ENCODE measurements at regions of chr13 and their contacts with region 1.

Region 1: DNA sequence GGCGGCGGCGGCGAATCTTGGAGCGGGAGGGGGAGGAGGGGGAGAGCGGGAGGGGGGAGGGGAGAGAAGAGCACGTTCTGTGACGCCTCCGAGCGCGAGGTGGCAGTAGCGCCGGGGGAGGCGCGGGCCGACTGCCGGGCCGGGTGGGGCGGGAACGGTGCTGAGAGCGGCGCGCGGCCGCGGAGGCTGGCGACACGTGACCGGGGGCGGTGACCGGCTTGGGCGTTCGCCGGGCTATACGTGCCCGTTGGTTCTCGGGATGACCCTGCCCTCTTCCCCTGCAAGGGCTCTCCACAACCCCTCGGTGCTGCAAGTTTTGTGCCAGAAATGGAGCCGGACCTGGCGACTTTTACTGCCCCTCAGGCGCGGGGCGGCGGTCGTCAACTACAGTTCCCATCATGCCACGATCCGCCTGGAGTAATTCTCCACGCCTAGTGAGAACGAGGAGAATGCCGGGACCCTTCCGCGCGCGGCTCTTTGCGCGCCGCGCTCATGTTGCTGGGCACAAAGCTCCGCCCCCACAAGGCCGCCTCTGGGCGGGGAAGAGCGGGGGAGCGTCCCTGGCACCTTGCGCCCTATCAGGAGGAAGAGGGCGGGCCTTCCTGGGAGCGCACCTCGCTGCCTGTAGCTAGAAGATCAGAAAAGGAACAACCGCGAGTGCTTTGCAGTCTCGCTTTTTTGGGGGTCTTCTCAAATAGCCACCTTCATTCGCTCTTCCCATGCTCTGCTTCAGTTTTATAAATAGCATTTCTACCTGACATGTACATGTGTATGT is at the start of gene KPNA3:
- DNase-seq: peak; percentile 86 to 97 (median 95)
- ATAC-seq: peak; percentile 93
- H3K4me3 ChIP-seq: peak within 1 kb of the TSS; percentile 96
- H3K4me3 Mint-ChIP-seq: peak within 1 kb of the TSS; percentile 87 to 99 (median 96)
- H3K27ac ChIP-seq: peak within 1 kb of the TSS; percentile 80
- H3K27ac Mint-ChIP-seq: peak within 1 kb of the TSS; percentile 91 to 98 (median 96)
- H3K4me1 ChIP-seq: peaks cover 19 to 23% of the 10 kb centered on the region in 2 donors
- H3K4me1 Mint-ChIP-seq: peaks cover 19 to 42% (median 31%) of the 10 kb centered on the region in 7 donors
- H3K27me3 ChIP-seq: no peaks in the 10 kb centered on the region
- H3K27me3 Mint-ChIP-seq: peaks cover 2 to 8% (median 3%) of the 10 kb centered on the region in 5 donors
- total RNA-seq, gene KPNA3: 17.0 to 38.7 (median 19.6) TPM

Region 2: DNA sequence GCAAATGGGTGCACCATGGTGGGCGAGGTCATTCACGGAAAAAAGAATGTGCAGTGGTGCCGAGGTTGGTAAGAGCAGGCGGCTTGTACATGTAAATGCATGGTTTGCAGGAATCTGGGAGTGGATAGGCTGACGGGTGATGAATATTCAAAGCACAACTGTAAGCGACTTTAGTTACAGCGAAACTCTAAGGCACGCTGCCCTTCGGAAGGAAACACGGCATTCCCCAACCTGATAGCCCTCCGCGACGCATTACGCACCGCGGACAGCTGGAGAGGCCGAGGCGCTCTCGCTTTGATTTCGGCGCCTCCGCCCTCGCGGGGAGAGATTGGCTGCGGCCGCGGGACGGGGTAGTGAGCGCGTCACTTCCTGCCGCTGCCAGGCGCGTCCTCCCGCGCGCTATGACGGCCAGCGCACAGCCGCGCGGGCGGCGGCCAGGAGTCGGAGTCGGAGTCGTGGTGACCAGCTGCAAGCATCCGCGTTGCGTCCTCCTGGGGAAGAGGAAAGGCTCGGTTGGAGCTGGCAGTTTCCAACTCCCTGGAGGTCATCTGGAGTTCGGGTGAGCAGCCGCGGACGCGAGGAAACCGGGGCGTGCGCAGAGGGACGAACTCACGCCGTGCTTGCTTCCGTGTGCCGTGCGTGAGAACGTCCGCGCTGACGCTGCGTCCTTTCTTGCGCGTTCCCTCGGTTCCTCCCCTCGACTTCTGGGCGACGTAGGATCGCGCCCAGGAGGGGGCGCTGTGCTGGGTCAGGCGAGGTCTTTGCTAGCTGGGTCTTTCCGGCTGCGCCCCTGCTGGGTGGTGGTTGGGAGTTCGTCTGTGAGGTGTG is 1755.2 kb before region 1 on chr13 and contains the start of gene NUDT15:
- CTCF ChIA-PET with region 1: no interaction called
- POLR2A ChIA-PET with region 1: interaction called, 3 read pairs
- intact Hi-C with region 1: loop called (anchors 2 kb)
- DNase-seq: peak; percentile 93 to 98 (median 97)
- ATAC-seq: peak; percentile 96
- H3K4me3 ChIP-seq: peak within 1 kb of the TSS; percentile 90
- H3K4me3 Mint-ChIP-seq: peak within 1 kb of the TSS; percentile 82 to 98 (median 95)
- H3K27ac ChIP-seq: peak within 1 kb of the TSS; percentile 91
- H3K27ac Mint-ChIP-seq: peak within 1 kb of the TSS; percentile 96 to 100 (median 97)
- H3K4me1 ChIP-seq: peaks cover 14 to 15% of the 10 kb centered on the region in 2 donors
- H3K4me1 Mint-ChIP-seq: peaks cover 15 to 52% (median 40%) of the 10 kb centered on the region in 7 donors
- H3K27me3 ChIP-seq: no peaks in the 10 kb centered on the region
- H3K27me3 Mint-ChIP-seq: no peaks in the 10 kb centered on the region
- total RNA-seq, gene NUDT15: 4.3 to 13.6 (median 8.7) TPM

Region 3: DNA sequence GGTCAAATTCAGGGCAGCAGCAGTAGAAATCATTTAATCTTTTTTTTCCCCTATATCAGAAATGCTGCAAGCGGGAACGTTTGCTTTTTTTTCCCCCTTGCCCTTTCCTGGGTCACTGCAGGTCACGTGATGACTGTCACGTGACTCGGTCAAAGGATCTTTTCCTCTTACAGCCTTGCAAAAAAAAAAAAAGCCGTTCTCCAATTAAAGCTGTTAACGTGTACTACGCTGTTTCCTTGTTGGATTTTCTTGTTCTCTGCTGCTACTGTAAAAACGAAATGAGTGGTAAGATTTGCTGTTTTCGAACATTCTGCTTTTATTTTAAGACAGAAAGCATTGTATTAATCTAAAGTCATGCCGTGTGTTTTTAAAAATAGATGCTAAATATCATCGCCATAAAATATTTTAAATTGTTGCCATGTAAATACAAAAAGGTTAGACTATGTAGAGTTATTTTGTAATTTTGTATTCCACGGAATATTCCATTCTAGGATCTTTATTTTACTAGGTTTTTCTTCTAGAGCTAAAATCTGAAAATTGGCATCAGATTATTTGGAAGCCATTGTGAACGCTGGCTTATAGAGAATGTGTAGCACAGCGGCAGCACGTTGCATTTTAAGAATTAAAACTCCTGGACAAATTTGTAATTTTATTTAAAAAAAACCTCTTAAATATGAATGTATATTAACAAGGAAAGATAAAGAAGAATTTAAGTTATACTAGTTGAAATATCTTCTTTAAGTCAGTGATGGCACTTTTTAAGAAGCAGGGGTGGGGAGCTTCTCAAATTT is 682.4 kb before region 1 on chr13:
- CTCF ChIA-PET with region 1: no interaction called
- POLR2A ChIA-PET with region 1: no interaction called
- intact Hi-C with region 1: loop called (anchors 5 to 10 kb)
- DNase-seq: peak; percentile 36 to 76 (median 68)
- ATAC-seq: peak; percentile 82
- H3K4me3 ChIP-seq: peak overlapping the region; percentile 75
- H3K4me3 Mint-ChIP-seq: peak overlapping the region; percentile 79 to 94 (median 90)
- H3K27ac ChIP-seq: peak overlapping the region; percentile 80
- H3K27ac Mint-ChIP-seq: peak overlapping the region; percentile 79 to 91 (median 90)
- H3K4me1 ChIP-seq: peaks cover 11 to 25% of the 10 kb centered on the region in 2 donors
- H3K4me1 Mint-ChIP-seq: peaks cover 16 to 48% (median 30%) of the 10 kb centered on the region in 7 donors
- H3K27me3 ChIP-seq: no peaks in the 10 kb centered on the region
- H3K27me3 Mint-ChIP-seq: no peaks in the 10 kb centered on the region

Region 4: DNA sequence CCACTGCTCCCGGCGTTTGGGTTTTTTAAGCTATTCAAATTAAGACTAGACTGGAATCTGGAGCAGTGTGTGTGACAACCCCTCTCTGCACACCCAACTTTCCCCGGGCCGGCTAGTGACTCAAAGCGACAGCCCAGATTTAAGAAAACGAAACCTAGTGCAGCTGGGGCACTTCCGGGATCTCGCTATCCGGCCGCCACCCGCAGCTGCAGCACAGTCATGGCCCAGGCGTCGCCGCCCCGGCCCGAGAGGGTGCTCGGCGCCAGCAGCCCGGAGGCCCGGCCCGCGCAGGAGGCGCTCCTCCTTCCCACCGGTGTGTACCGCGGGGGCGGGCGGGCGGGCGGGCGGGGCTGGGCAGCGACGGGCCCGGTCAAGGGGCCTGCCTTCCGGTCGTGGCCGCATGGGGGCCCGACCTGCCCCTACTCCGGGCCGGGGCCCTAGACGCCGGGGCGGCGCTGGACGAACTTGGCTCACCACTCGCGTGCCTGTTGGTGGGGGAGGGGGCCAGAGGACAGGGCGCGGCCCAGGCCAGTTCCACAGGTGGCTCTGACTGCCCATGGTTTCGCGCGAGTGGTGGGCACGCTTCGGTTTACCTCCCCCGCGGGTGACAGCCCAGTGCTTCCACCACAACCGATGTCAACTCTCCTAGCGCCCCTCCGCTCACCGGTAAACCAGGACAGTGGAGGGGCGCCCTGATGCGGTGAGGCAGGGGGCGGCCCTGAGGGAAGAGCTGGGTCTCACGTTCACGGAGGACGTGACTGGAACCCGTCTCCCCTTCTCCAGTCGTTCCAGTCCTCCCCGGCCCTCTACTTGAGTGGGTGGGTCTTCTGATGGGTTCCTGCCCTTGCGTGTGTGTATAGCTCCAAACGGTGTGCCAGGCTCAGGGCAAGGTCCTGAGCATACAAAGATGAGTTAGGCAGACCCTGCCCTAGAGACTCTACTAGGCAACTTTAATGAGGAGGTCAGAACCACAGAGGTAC is 296.7 kb before region 1 on chr13 and contains the start of gene PHF11:
- CTCF ChIA-PET with region 1: no interaction called
- POLR2A ChIA-PET with region 1: interaction called, 11 read pairs
- intact Hi-C with region 1: loop called in 1 of 2 experiments (anchors 1 kb)
- DNase-seq: peak; percentile 66 to 86 (median 83)
- ATAC-seq: peak; percentile 90
- H3K4me3 ChIP-seq: peak within 1 kb of the TSS; percentile 77
- H3K4me3 Mint-ChIP-seq: peak within 1 kb of the TSS; percentile 91 to 99 (median 97)
- H3K27ac ChIP-seq: peak within 1 kb of the TSS; percentile 90
- H3K27ac Mint-ChIP-seq: peak within 1 kb of the TSS; percentile 81 to 100 (median 99)
- H3K4me1 ChIP-seq: peaks cover 25 to 34% of the 10 kb centered on the region in 2 donors
- H3K4me1 Mint-ChIP-seq: peaks cover 34 to 59% (median 53%) of the 10 kb centered on the region in 7 donors
- H3K27me3 ChIP-seq: no peaks in the 10 kb centered on the region
- H3K27me3 Mint-ChIP-seq: no peaks in the 10 kb centered on the region
- total RNA-seq, gene PHF11: 96.0 to 132 (median 126) TPM

Region 5: DNA sequence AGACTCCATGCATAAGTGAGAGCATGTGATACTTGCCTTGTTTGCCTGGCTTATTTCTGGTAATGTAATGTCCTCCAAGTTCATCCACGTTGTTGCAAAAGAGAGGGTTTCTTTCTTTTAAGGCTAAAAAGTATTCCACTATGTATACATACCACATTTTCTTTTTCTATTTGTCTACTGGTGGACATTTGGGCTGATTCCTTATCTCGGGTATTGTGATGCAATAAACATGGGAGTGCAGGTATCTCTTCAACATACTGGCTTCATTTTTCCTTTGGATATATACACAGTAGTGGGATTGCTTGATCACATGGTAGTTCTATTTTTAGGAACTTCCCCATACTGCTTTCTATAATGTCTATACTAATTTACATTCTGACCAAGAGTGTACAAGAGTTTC is 51.9 kb before region 1 on chr13:
- CTCF ChIA-PET with region 1: no interaction called
- POLR2A ChIA-PET with region 1: no interaction called
- intact Hi-C with region 1: loop called in 1 of 2 experiments (anchors 5 kb)
- DNase-seq: no peak
- ATAC-seq: no peak
- H3K4me3 ChIP-seq: no peak overlapping the region
- H3K4me3 Mint-ChIP-seq: no peak overlapping the region
- H3K27ac ChIP-seq: no peak overlapping the region
- H3K27ac Mint-ChIP-seq: no peak overlapping the region
- H3K4me1 ChIP-seq: no peaks in the 10 kb centered on the region
- H3K4me1 Mint-ChIP-seq: peaks cover 0 to 4% (median 0%) of the 10 kb centered on the region in 7 donors
- H3K27me3 ChIP-seq: no peaks in the 10 kb centered on the region
- H3K27me3 Mint-ChIP-seq: no peaks in the 10 kb centered on the region

Region 6: GRCh38 chr13:49996951-49997895 is 204.5 kb after region 1 on chr13 and contains the start of gene TRIM13:
- CTCF ChIA-PET with region 1: no interaction called
- POLR2A ChIA-PET with region 1: interaction called, 8 read pairs
- intact Hi-C with region 1: loop called (anchors 1 to 2 kb)
- DNase-seq: peak; percentile 64 to 85 (median 82)
- ATAC-seq: peak; percentile 88
- H3K4me3 ChIP-seq: peak within 1 kb of the TSS; percentile 97
- H3K4me3 Mint-ChIP-seq: peak within 1 kb of the TSS; percentile 83 to 95 (median 86)
- H3K27ac ChIP-seq: peak within 1 kb of the TSS; percentile 89
- H3K27ac Mint-ChIP-seq: peak within 1 kb of the TSS; percentile 84 to 92 (median 87)
- H3K4me1 ChIP-seq: peaks cover 25 to 31% of the 10 kb centered on the region in 2 donors
- H3K4me1 Mint-ChIP-seq: peaks cover 16 to 57% (median 49%) of the 10 kb centered on the region in 7 donors
- H3K27me3 ChIP-seq: no peaks in the 10 kb centered on the region
- H3K27me3 Mint-ChIP-seq: no peaks in the 10 kb centered on the region
- total RNA-seq, gene TRIM13: 18.3 to 27.1 (median 21.8) TPM

Region 7: GRCh38 chr13:50801087-50801931 is 1008.6 kb after region 1 on chr13:
- CTCF ChIA-PET with region 1: no interaction called
- POLR2A ChIA-PET with region 1: no interaction called
- intact Hi-C with region 1: loop called in 1 of 2 experiments (anchors 1 kb)
- DNase-seq: peak; percentile 13 to 71 (median 56)
- ATAC-seq: peak; percentile 96
- H3K4me3 ChIP-seq: no peak overlapping the region
- H3K4me3 Mint-ChIP-seq: peak overlapping the region in 1 of 10 donors; percentile 39
- H3K27ac ChIP-seq: no peak overlapping the region
- H3K27ac Mint-ChIP-seq: peak overlapping the region in 1 of 9 donors; percentile 20
- H3K4me1 ChIP-seq: peaks cover 0 to 3% of the 10 kb centered on the region in 2 donors
- H3K4me1 Mint-ChIP-seq: peaks cover 0 to 26% (median 6%) of the 10 kb centered on the region in 7 donors
- H3K27me3 ChIP-seq: no peaks in the 10 kb centered on the region
- H3K27me3 Mint-ChIP-seq: peaks cover 0 to 8% (median 0%) of the 10 kb centered on the region in 5 donors

Measured in naive thymus-derived CD4-positive, alpha-beta T cell (primary cell).